H1 (cell line): ENCODE measurements at regions of chr17 and their contacts with region 1.

Region 1: GRCh38 chr17:76452660-76453430 is at the start of gene UBE2O:
- DNase-seq: peak; percentile 83 to 98
- H3K4me3 ChIP-seq: peak within 1 kb of the TSS; percentile 67 to 84 (median 80)
- H3K27ac ChIP-seq: 0 out of 2 replicates have a peak within 1 kb of the TSS, but pooled peaks have one; percentile 0
- H3K4me1 ChIP-seq: peaks cover 7 to 22% (median 13%) of the 10 kb centered on the region in 4 experiments
- H3K27me3 ChIP-seq: no peaks in the 10 kb centered on the region
- CTCF ChIP-seq: peak; percentile 24 to 58 (median 52); a peak in 3 of 4 replicates
- EP300 ChIP-seq: peak in 1 of 2 experiments; percentile 42; a peak in 1 of 3 replicates
- POLR2A ChIP-seq: 0 out of 3 replicates have a peak, but pooled peaks of 1 of the 2 experiments have one; percentile 21
- RAD21 ChIP-seq: no peak
- total RNA-seq, gene UBE2O: 63.0 and 65.6 TPM in 2 replicates

Region 2: DNA sequence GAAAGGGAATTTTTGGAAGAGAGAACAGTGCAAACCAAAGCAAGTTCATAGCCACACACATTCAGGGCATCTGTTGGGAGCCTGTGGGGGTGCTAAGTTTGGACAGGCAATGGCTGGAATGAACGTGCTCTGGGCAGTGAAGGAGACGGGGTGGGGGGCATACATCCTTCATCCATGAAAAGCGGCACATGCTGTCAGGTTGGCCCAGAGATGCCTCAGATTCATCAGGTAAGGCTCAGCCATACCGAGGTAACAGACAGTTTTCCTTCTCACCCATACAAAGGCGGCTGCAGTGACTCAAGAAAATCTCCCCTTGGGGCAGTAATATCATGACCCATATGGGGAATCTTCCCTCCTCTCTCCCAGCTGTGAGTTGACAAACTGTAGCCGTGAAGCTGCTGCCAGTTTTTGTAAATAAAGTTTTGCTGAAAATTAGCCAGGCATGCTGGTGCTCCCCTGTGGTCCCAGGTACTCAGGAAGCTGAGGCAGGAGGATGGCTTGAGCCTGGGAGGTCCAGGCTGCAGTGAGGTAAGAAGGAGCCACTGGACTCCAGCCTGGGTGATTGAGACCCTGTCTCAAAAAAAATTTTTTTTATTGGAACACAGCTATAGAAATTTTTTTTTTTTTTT is 196.9 kb before region 1 on chr17:
- CTCF ChIA-PET with region 1: no interaction called
- POLR2A ChIA-PET with region 1: no interaction called
- DNase-seq: no peak
- H3K4me3 ChIP-seq: no peak overlapping the region
- H3K27ac ChIP-seq: no peak overlapping the region
- H3K4me1 ChIP-seq: no peaks in the 10 kb centered on the region
- H3K27me3 ChIP-seq: no peaks in the 10 kb centered on the region; a peak in 1 of 7 replicates
- CTCF ChIP-seq: no peak
- EP300 ChIP-seq: no peak
- POLR2A ChIP-seq: no peak
- RAD21 ChIP-seq: no peak

Region 3: GRCh38 chr17:76376318-76377133 is 76.3 kb before region 1 on chr17:
- CTCF ChIA-PET with region 1: no interaction called
- POLR2A ChIA-PET with region 1: no interaction called
- DNase-seq: no peak
- H3K4me3 ChIP-seq: no peak overlapping the region
- H3K27ac ChIP-seq: no peak overlapping the region
- H3K4me1 ChIP-seq: peaks cover 0 to 10% (median 3%) of the 10 kb centered on the region in 4 experiments; a peak in 5 of 7 replicates
- H3K27me3 ChIP-seq: no peaks in the 10 kb centered on the region
- CTCF ChIP-seq: no peak
- EP300 ChIP-seq: no peak
- POLR2A ChIP-seq: no peak
- RAD21 ChIP-seq: no peak

Region 4: GRCh38 chr17:76414334-76415295 is 38.2 kb before region 1 on chr17:
- CTCF ChIA-PET with region 1: interaction called, 197 read pairs
- POLR2A ChIA-PET with region 1: interaction called, 7 read pairs
- DNase-seq: no peak
- H3K4me3 ChIP-seq: no peak overlapping the region
- H3K27ac ChIP-seq: no peak overlapping the region
- H3K4me1 ChIP-seq: peaks cover 4 to 11% (median 6%) of the 10 kb centered on the region in 4 experiments
- H3K27me3 ChIP-seq: no peaks in the 10 kb centered on the region
- CTCF ChIP-seq: no peak
- EP300 ChIP-seq: no peak
- POLR2A ChIP-seq: no peak
- RAD21 ChIP-seq: no peak

Region 5: GRCh38 chr17:76467366-76467765 is 14.5 kb after region 1 on chr17 and contains the start of gene AANAT:
- CTCF ChIA-PET with region 1: interaction called, 69 read pairs
- POLR2A ChIA-PET with region 1: interaction called, 5 read pairs
- DNase-seq: peak in 1 of 2 experiments; percentile 47
- H3K4me3 ChIP-seq: no peak within 1 kb of the TSS
- H3K27ac ChIP-seq: no peak within 1 kb of the TSS
- H3K4me1 ChIP-seq: peaks cover 0 to 9% (median 0%) of the 10 kb centered on the region in 4 experiments; a peak in 2 of 7 replicates
- H3K27me3 ChIP-seq: no peaks in the 10 kb centered on the region
- CTCF ChIP-seq: no peak
- EP300 ChIP-seq: no peak
- POLR2A ChIP-seq: no peak
- RAD21 ChIP-seq: no peak
- total RNA-seq, gene AANAT: not detected in 2 replicates

Region 6: DNA sequence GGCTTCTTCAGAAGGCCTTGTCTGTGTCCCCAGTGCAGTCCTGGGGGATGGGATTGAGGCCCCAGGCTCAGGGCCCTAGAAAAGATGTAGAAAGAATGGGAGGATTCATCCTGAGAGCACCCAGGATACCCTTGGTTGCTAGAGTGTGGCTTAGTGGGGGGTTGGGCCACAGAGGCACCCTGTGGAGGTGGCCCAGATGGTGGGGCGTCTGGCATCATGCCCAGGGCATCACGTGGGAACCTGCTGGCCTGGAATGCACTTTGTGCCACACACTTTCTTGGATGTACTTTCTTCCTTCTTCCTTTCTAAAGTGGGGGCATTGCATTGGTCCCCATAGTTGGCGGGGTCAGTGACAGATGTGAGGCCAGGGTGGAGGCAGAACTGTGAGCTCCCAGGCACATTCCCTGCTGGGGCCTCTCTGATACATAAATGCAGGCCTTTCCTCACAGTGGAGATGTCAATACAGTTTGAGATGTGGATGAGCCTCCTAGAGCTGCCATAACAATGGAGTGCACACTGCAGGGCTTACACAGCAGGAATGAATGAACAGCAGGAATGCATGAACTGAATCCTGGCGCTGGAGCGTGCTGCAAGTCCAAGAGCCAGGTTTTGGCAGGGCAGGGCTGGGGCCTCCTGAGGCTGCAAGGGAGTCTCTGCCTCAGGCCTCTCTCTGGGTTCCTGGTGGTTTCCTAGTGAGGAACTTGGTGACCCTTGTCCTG is 458.6 kb after region 1 on chr17:
- CTCF ChIA-PET with region 1: no interaction called
- POLR2A ChIA-PET with region 1: no interaction called
- DNase-seq: no peak
- H3K4me3 ChIP-seq: no peak overlapping the region
- H3K27ac ChIP-seq: no peak overlapping the region
- H3K4me1 ChIP-seq: peaks cover 0 to 8% (median 2%) of the 10 kb centered on the region in 4 experiments; a peak in 3 of 7 replicates
- H3K27me3 ChIP-seq: no peaks in the 10 kb centered on the region
- CTCF ChIP-seq: no peak
- EP300 ChIP-seq: no peak
- POLR2A ChIP-seq: no peak
- RAD21 ChIP-seq: no peak